Endothelial cell of umbilical vein (primary cell): ENCODE measurements at regions of chr19 and their contacts with region 1.

Region 1: GRCh38 chr19:6279931-6280591 is at the start of gene MLLT1:
- DNase-seq: peak; percentile 96
- H3K4me3 ChIP-seq: peak within 1 kb of the TSS; percentile 70 to 90 (median 82)
- H3K27ac ChIP-seq: peak within 1 kb of the TSS; percentile 73
- H3K4me1 ChIP-seq: peaks cover 39% of the 10 kb centered on the region
- H3K27me3 ChIP-seq: no peaks in the 10 kb centered on the region
- CTCF ChIP-seq: peak; percentile 37 to 71
- POLR2A ChIP-seq: no peak
- total RNA-seq, gene MLLT1: 79.2 and 84.8 TPM in 2 replicates

Region 2: GRCh38 chr19:6238643-6239281 is 41.3 kb before region 1 on chr19:
- CTCF ChIA-PET with region 1: interaction called, 4 read pairs
- POLR2A ChIA-PET with region 1: interaction called, 3 read pairs
- dilution Hi-C with region 1: no loop called
- intact Hi-C with region 1: loop called (anchors 1 kb)
- DNase-seq: no peak
- H3K4me3 ChIP-seq: no peak overlapping the region
- H3K27ac ChIP-seq: peak overlapping the region; percentile 99
- H3K4me1 ChIP-seq: peaks cover 68% of the 10 kb centered on the region
- H3K27me3 ChIP-seq: no peaks in the 10 kb centered on the region
- CTCF ChIP-seq: no peak
- POLR2A ChIP-seq: no peak

Region 3: GRCh38 chr19:6250024-6250615 is 29.9 kb before region 1 on chr19:
- CTCF ChIA-PET with region 1: no interaction called
- POLR2A ChIA-PET with region 1: no interaction called
- dilution Hi-C with region 1: no loop called
- intact Hi-C with region 1: no loop called
- DNase-seq: no peak
- H3K4me3 ChIP-seq: no peak overlapping the region
- H3K27ac ChIP-seq: no peak overlapping the region
- H3K4me1 ChIP-seq: peaks cover 10% of the 10 kb centered on the region
- H3K27me3 ChIP-seq: no peaks in the 10 kb centered on the region
- CTCF ChIP-seq: no peak
- POLR2A ChIP-seq: no peak

Region 4: DNA sequence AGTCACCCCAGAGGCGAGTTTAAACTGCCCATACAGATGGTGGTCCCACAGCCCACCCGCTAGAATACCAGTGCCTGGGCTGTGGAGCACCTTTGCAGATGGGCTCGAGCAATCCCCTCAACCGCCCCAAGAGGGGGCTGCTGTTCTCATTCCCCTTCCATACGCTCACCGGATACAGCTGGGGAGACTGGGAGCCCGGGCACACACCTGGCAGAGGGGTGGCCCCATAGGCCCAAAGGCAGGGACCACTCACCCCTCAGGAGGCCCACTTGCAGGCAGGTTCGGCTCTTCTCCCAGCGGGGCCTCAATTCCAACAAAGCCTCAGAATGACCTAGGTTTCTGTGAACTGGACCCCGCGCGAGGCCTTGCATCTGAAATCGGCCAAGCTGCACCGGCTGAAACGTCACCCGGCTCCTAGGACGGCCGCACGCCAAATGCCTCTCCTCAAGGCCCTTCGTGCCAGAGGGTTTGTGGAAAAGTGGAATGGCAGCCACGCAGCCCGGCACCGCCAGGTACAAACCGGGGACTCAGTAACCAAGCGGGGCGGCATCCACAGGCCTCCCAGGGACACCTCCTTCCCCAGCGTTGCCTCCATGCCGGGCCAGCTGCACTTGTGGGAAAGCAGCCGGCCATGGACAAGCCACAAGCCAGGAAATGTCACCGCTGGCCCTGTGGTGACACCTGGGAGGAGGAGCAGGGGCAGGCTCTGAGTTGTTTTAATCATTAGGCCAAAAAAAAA is 19.0 kb before region 1 on chr19:
- CTCF ChIA-PET with region 1: interaction called, 10 read pairs
- POLR2A ChIA-PET with region 1: interaction called, 3 read pairs
- dilution Hi-C with region 1: no loop called
- intact Hi-C with region 1: loop called (anchors 1 kb)
- DNase-seq: peak; percentile 44
- H3K4me3 ChIP-seq: no peak overlapping the region
- H3K27ac ChIP-seq: no peak overlapping the region
- H3K4me1 ChIP-seq: no peaks in the 10 kb centered on the region
- H3K27me3 ChIP-seq: no peaks in the 10 kb centered on the region
- CTCF ChIP-seq: peak; percentile 59 to 76
- POLR2A ChIP-seq: no peak